Activated B cell treated with CpG ODN at 0.5 μM for 24 hours (primary cell): ENCODE measurements at regions of chr3 and their contacts with region 1.

Region 1: DNA sequence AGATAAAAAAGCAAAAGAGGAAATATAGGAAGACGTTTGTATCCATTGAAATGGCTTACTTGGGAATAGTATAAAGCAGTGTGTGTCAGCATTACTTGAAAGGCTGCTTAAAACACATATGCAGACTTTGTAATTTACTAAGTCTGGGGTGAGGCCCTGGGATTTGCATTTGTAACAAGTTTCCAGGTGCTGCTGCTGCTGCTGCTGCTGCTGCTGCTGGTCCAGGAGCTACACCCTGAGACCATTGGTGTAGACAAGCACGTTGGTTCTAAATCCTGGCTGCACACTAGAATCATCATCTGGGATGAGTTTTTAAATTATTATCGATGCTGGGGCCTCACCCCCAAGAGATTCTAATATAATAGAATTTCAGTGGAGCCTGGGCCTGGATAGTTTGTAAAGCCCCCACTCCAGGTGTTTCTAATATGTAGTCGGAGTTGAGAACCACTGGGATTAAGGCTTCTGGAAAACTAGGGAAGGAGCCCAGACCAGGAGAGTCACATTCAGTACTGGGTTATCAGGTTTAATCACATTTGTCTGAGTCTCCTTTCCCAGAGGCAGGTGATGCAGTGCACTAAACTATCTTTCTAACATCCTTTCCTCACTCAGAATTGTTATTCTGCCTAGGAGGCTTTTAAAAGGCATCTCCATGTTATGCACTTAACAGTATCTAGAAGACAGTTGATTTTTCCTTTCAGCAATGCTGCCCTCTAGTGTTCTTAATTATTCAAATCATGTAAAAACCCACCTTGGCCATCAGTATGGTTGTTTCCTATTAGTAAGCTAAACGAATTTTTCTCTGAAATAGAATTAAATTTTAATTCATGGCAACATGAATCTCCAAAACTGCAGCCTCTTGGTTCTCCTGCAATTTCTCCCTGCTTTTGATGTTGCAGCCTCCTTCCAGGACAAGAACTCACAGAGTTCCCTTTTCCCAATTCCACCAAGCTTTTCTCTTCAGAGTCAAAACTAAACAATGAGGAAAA is 45.4 kb downstream of the SSR3 start:
- DNase-seq: no peak
- ATAC-seq: peak; percentile 58
- H3K4me3 Mint-ChIP-seq: no peak overlapping the region
- H3K27ac Mint-ChIP-seq: no peak overlapping the region
- H3K4me1 Mint-ChIP-seq: no peaks in the 10 kb centered on the region
- H3K27me3 Mint-ChIP-seq: peaks cover 16% of the 10 kb centered on the region
- CTCF ChIP-seq: peak; percentile 21

Region 2: GRCh38 chr3:155805802-155806618 is 703.5 kb before region 1 on chr3 and contains the start of gene C3orf33:
- CTCF ChIA-PET with region 1: interaction called, 12 read pairs
- POLR2A ChIA-PET with region 1: no interaction called
- intact Hi-C with region 1: loop called (anchors 2 kb)
- DNase-seq: peak; percentile 75
- ATAC-seq: peak; percentile 93
- H3K4me3 Mint-ChIP-seq: peak within 1 kb of the TSS; percentile 90
- H3K27ac Mint-ChIP-seq: peak within 1 kb of the TSS; percentile 80
- H3K4me1 Mint-ChIP-seq: peaks cover 3% of the 10 kb centered on the region
- H3K27me3 Mint-ChIP-seq: peaks cover 6% of the 10 kb centered on the region
- CTCF ChIP-seq: peak; percentile 82
- total RNA-seq, gene C3orf33: 1.6 and 2.4 TPM in 2 replicates

Region 3: GRCh38 chr3:156158656-156159542 is 350.6 kb before region 1 on chr3:
- CTCF ChIA-PET with region 1: interaction called, 124 read pairs
- POLR2A ChIA-PET with region 1: no interaction called
- intact Hi-C with region 1: no loop called
- DNase-seq: no peak
- ATAC-seq: no peak
- H3K4me3 Mint-ChIP-seq: no peak overlapping the region
- H3K27ac Mint-ChIP-seq: no peak overlapping the region
- H3K4me1 Mint-ChIP-seq: peaks cover 11% of the 10 kb centered on the region
- H3K27me3 Mint-ChIP-seq: no peaks in the 10 kb centered on the region
- CTCF ChIP-seq: no peak

Region 4: DNA sequence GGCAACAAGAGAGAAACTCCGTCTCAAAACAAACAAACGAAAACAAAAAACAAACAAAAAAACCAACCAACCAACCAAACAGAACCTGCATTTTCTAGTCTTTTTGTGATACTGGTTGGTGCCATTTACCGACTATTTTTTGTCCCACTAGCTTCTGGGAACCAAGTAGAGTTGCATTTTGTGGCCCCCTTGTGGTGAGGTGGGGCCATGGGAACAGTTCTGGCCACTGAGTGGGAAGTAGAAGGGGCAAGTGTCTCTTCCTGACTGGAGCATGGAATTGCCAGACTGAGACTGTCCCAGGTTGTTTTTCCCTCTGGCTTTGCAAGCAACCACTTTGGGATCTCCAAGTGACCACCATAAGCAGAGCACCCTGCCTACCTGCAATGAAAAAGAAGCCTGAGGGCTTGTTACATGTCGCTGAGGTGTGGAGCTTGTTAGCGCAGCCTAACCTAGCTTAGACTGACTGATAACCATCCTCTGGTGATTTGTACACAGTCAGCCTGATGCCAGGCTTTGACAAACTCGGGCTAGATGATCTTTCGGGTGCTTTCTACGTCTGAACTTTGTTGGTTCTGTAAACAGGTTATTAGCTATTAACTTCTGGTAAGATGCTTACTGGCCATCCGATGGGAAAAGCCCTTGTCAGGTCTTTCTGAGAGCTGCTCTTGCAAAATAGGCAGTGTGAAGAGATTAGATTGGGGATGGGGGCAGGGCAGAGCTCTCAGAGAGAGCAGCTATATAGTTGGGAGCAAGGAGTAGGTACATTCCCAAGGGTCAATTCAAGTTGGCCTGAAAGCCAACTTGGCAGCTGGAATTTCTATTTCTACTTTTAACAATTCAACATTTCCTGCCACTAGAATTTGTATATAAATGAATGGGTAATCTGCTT is 126.8 kb before region 1 on chr3:
- CTCF ChIA-PET with region 1: interaction called, 3 read pairs
- POLR2A ChIA-PET with region 1: no interaction called
- intact Hi-C with region 1: loop called (anchors 1 kb)
- DNase-seq: no peak
- ATAC-seq: no peak
- H3K4me3 Mint-ChIP-seq: no peak overlapping the region
- H3K27ac Mint-ChIP-seq: no peak overlapping the region
- H3K4me1 Mint-ChIP-seq: no peaks in the 10 kb centered on the region
- H3K27me3 Mint-ChIP-seq: peaks cover 8% of the 10 kb centered on the region
- CTCF ChIP-seq: no peak

Region 5: GRCh38 chr3:156474560-156475389 is 34.7 kb before region 1 on chr3:
- CTCF ChIA-PET with region 1: interaction called, 30 read pairs
- POLR2A ChIA-PET with region 1: no interaction called
- intact Hi-C with region 1: loop called (anchors 1 kb)
- DNase-seq: no peak
- ATAC-seq: no peak
- H3K4me3 Mint-ChIP-seq: no peak overlapping the region
- H3K27ac Mint-ChIP-seq: no peak overlapping the region
- H3K4me1 Mint-ChIP-seq: no peaks in the 10 kb centered on the region
- H3K27me3 Mint-ChIP-seq: peaks cover 24% of the 10 kb centered on the region
- CTCF ChIP-seq: no peak

Region 6: GRCh38 chr3:156533205-156533604 is 23.7 kb after region 1 on chr3:
- CTCF ChIA-PET with region 1: no interaction called
- POLR2A ChIA-PET with region 1: no interaction called
- intact Hi-C with region 1: no loop called
- DNase-seq: no peak
- ATAC-seq: no peak
- H3K4me3 Mint-ChIP-seq: no peak overlapping the region
- H3K27ac Mint-ChIP-seq: no peak overlapping the region
- H3K4me1 Mint-ChIP-seq: no peaks in the 10 kb centered on the region
- H3K27me3 Mint-ChIP-seq: no peaks in the 10 kb centered on the region
- CTCF ChIP-seq: no peak

Region 7: GRCh38 chr3:156576651-156577343 is 67.3 kb after region 1 on chr3:
- CTCF ChIA-PET with region 1: no interaction called
- POLR2A ChIA-PET with region 1: no interaction called
- intact Hi-C with region 1: no loop called
- DNase-seq: no peak
- ATAC-seq: no peak
- H3K4me3 Mint-ChIP-seq: no peak overlapping the region
- H3K27ac Mint-ChIP-seq: no peak overlapping the region
- H3K4me1 Mint-ChIP-seq: no peaks in the 10 kb centered on the region
- H3K27me3 Mint-ChIP-seq: peaks cover 2% of the 10 kb centered on the region
- CTCF ChIP-seq: no peak

Region 8: GRCh38 chr3:157136647-157137387 is 627.3 kb after region 1 on chr3:
- CTCF ChIA-PET with region 1: interaction called, 6 read pairs
- POLR2A ChIA-PET with region 1: no interaction called
- intact Hi-C with region 1: loop called (anchors 1 kb)
- DNase-seq: no peak
- ATAC-seq: no peak
- H3K4me3 Mint-ChIP-seq: no peak overlapping the region
- H3K27ac Mint-ChIP-seq: no peak overlapping the region
- H3K4me1 Mint-ChIP-seq: peaks cover 5% of the 10 kb centered on the region
- H3K27me3 Mint-ChIP-seq: no peaks in the 10 kb centered on the region
- CTCF ChIP-seq: no peak